IMR-90 (cell line): ENCODE measurements at regions of chr14 and their contacts with region 1.

Region 1: GRCh38 chr14:49461529-49462401 is 124.4 kb downstream of the RPS29 start:
- DNase-seq: peak; percentile 81
- ATAC-seq: peak; percentile 96
- H3K4me3 ChIP-seq: no peak overlapping the region
- H3K27ac ChIP-seq: no peak overlapping the region
- H3K4me1 ChIP-seq: no peaks in the 10 kb centered on the region
- H3K27me3 ChIP-seq: no peaks in the 10 kb centered on the region; the same call in 1 of the 2 replicates
- CTCF ChIP-seq: peak; percentile 80
- POLR2A ChIP-seq: no peak
- RAD21 ChIP-seq: peak; percentile 68

Region 2: DNA sequence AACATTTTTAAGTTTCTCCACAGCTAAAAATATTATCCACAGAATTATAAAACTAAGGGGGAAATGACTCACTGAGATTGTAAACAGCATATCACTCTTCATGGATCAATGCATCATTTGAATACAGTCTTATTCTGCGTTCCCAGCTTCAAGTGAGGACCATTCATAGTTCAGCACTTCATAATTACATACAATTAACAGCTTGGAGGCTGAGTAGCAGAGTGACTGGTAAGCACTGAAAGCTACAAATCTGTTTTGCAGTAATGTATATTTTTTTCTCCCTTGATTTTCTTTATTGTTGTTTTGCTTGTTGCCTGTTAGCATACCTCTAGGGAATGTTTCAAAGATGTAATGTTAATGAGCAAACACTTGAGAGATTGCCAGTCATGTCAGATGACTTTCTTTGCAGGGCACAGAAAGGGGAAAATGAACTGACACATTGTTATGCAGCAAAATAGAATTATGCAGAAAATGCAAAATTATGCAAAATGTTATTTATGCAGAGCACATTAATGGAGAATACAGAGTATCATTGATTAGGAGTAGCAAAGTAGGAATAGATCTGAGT is 14.1 kb before region 1 on chr14:
- CTCF ChIA-PET with region 1: interaction called, 11 read pairs
- POLR2A ChIA-PET with region 1: no interaction called
- dilution Hi-C with region 1: no loop called
- in situ Hi-C with region 1: no loop called
- intact Hi-C with region 1: no loop called
- DNase-seq: no peak
- ATAC-seq: no peak
- H3K4me3 ChIP-seq: no peak overlapping the region
- H3K27ac ChIP-seq: no peak overlapping the region
- H3K4me1 ChIP-seq: no peaks in the 10 kb centered on the region
- H3K27me3 ChIP-seq: no peaks in the 10 kb centered on the region
- CTCF ChIP-seq: no peak
- POLR2A ChIP-seq: no peak
- RAD21 ChIP-seq: no peak

Region 3: GRCh38 chr14:49479432-49479831 is 17.7 kb after region 1 on chr14:
- CTCF ChIA-PET with region 1: interaction called, 11 read pairs
- POLR2A ChIA-PET with region 1: no interaction called
- dilution Hi-C with region 1: no loop called
- in situ Hi-C with region 1: no loop called
- intact Hi-C with region 1: no loop called
- DNase-seq: no peak
- ATAC-seq: no peak
- H3K4me3 ChIP-seq: no peak overlapping the region
- H3K27ac ChIP-seq: no peak overlapping the region
- H3K4me1 ChIP-seq: no peaks in the 10 kb centered on the region
- H3K27me3 ChIP-seq: no peaks in the 10 kb centered on the region; the same call in 1 of the 2 replicates
- CTCF ChIP-seq: no peak
- POLR2A ChIP-seq: no peak
- RAD21 ChIP-seq: no peak

Region 4: DNA sequence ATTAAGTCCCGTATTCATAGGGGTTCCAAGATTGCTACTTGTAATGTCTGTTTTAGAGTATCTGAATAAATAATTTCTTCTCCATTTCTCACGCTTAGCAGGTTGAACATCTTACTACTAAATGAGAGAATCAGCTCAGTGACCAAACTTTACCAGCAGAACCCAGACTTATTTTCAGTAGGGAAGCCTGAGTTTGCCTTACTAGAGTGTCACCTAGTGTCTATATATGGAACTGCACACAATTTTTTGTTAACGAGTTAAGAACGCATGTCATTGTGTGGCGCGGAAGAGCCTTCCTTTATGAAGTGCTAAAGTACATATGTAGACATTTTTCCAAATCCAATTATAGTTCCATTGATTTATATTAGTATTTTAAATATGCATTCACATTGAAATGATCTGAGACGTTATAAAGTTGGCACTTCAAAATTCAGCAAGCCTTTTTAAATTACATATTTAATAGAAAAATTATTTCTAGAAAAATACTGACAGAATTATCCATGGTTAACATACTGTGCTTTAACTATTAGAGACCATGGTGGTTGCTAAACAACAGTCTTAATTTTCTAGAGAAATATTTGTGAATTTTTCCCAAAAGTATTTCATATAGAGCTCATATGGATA is 36.1 kb after region 1 on chr14:
- CTCF ChIA-PET with region 1: interaction called, 18 read pairs
- POLR2A ChIA-PET with region 1: no interaction called
- dilution Hi-C with region 1: no loop called
- in situ Hi-C with region 1: no loop called
- intact Hi-C with region 1: loop called (anchors 5 kb)
- DNase-seq: peak; percentile 74
- ATAC-seq: peak; percentile 96
- H3K4me3 ChIP-seq: no peak overlapping the region
- H3K27ac ChIP-seq: no peak overlapping the region
- H3K4me1 ChIP-seq: no peaks in the 10 kb centered on the region
- H3K27me3 ChIP-seq: peaks cover 18% of the 10 kb centered on the region
- CTCF ChIP-seq: peak; percentile 78
- POLR2A ChIP-seq: no peak
- RAD21 ChIP-seq: peak; percentile 71

Region 5: GRCh38 chr14:49550286-49551184 is 88.8 kb after region 1 on chr14:
- CTCF ChIA-PET with region 1: interaction called, 9 read pairs
- POLR2A ChIA-PET with region 1: no interaction called
- dilution Hi-C with region 1: no loop called
- in situ Hi-C with region 1: no loop called
- intact Hi-C with region 1: loop called (anchors 10 kb)
- DNase-seq: peak; percentile 19
- ATAC-seq: peak; percentile 54; the same call in 1 of the 2 replicates
- H3K4me3 ChIP-seq: no peak overlapping the region
- H3K27ac ChIP-seq: no peak overlapping the region
- H3K4me1 ChIP-seq: no peaks in the 10 kb centered on the region
- H3K27me3 ChIP-seq: no peaks in the 10 kb centered on the region
- CTCF ChIP-seq: peak; percentile 35; the same call in 1 of the 2 replicates
- POLR2A ChIP-seq: no peak
- RAD21 ChIP-seq: peak; percentile 39

Region 6: DNA sequence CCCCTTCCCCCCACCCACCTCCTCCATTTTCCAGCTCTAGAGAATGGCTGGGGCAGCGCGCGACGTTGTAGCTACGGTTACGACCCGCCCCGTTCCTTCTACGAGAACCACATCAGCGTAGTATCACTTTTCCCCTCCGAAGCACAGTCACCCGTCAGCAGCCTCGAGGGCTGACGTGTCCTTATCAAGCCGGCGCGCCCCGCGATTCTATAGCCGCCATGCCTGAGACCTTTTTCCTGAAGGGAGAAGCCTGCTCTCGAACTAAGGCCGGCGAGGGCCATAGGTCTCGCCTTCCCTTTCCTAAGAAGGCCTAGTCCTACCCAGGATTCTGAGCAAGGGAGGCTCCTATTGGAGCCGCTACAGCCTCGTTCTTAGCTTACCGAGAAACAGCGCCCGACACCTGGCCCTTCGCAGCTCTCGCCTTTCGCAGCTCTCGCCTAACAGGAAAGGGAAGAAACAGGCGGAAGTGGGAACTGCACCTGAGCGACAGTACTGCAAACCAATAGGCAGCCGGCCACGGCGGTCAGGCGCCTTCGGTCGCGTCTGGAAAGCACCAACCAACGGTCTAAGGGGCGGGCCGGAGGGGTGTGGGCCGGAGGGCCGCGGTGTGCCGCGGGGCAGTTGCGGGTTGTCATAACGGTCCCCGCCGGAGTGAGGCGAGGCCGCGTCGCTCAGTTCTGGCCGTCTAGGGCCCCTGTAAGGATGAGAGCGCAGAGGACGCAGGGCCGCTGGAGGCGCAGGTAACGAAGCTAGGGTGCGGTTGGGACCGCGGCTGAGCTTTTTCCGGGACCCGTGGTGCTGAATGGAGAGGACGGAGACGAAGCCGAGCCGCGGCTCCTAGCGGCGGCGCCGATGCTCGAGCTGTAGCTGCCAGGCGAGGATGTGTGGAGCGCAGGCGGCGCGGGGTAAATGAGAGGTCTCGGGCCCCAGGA is 158.7 kb after region 1 on chr14 and contains the starts of genes MGAT2 and RPL36AL:
- CTCF ChIA-PET with region 1: no interaction called
- POLR2A ChIA-PET with region 1: no interaction called
- dilution Hi-C with region 1: no loop called
- in situ Hi-C with region 1: no loop called
- intact Hi-C with region 1: loop called (anchors 2 kb)
- DNase-seq: peak; percentile 99
- ATAC-seq: peak; percentile 94
- H3K4me3 ChIP-seq: peak within 1 kb of the TSS; percentile 84
- H3K27ac ChIP-seq: peak within 1 kb of the TSS; percentile 91
- H3K4me1 ChIP-seq: peaks cover 13% of the 10 kb centered on the region
- H3K27me3 ChIP-seq: no peaks in the 10 kb centered on the region
- CTCF ChIP-seq: peak; percentile 29; the same call in 1 of the 2 replicates
- POLR2A ChIP-seq: peak; percentile 97
- RAD21 ChIP-seq: no peak
- total RNA-seq, gene MGAT2: 67.6 and 73.6 TPM in 2 replicates
- total RNA-seq, gene RPL36AL: 129 and 249 TPM in 2 replicates

Region 7: DNA sequence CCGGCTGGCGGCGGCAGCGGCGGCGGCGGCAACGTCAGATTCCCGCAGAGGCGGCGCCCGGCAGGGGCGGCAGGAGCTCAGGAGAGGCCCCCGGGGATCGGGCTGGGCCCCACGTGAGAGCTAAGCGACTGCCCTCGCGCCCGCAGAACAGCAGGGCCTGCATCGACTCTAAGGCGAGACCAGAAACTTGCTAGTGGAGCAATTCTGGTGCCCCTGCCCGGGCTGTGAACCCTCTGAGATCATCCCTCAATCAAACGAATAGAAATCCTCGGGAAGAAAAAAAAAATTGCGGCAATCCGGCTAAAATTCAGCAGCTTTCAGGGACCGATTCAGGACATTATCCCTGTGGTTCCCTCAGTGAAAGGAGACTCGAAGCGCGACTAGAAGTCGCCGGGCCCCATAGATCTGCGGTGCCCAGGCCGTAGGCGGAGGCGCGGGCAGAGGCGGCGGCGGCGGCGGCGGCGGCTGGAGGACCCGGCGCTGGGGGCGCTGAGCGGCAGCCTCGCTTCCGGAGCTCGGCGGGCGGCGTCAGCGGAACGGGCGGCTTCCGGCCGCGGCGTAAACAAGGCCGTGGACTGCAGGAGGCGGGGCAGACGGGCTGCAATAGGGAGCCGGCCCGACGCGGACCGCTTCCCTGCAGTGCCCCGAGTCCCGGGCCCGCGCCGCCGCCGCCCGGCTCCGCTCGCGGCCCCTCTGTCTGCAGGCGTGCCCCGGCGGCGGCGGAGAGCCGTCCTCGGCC is 306.0 kb after region 1 on chr14 and contains the start of gene KLHDC2:
- CTCF ChIA-PET with region 1: no interaction called
- POLR2A ChIA-PET with region 1: no interaction called
- dilution Hi-C with region 1: no loop called
- in situ Hi-C with region 1: loop called (anchors 25 kb)
- intact Hi-C with region 1: loop called (anchors 5 kb)
- DNase-seq: peak; percentile 88
- ATAC-seq: peak; percentile 90
- H3K4me3 ChIP-seq: peak within 1 kb of the TSS; percentile 96
- H3K27ac ChIP-seq: peak within 1 kb of the TSS; percentile 91
- H3K4me1 ChIP-seq: peaks cover 9% of the 10 kb centered on the region
- H3K27me3 ChIP-seq: no peaks in the 10 kb centered on the region
- CTCF ChIP-seq: peak; percentile 53
- POLR2A ChIP-seq: peak; percentile 91
- RAD21 ChIP-seq: no peak
- total RNA-seq, gene KLHDC2: 41.8 and 51.1 TPM in 2 replicates